Activated CD4-positive, alpha-beta memory T cell treated with anti-CD3 and anti-CD28 coated beads, Interleukin-2, amount 10 ng/mL, durations not matched to agents 7 days and 5 days (primary cell): ENCODE measurements at regions of chr20 and their contacts with region 1.

Region 1: GRCh38 chr20:23420943-23421931 is at the start of gene NAPB:
- DNase-seq: peak; percentile 94
- H3K4me3 Mint-ChIP-seq: peak within 1 kb of the TSS; percentile 95
- H3K27ac Mint-ChIP-seq: peak within 1 kb of the TSS; percentile 71
- H3K4me1 Mint-ChIP-seq: peaks cover 51% of the 10 kb centered on the region
- H3K27me3 Mint-ChIP-seq: no peaks in the 10 kb centered on the region
- total RNA-seq, gene NAPB: 16.0 TPM

Region 2: GRCh38 chr20:23357767-23358591 is 63.3 kb before region 1 on chr20:
- CTCF ChIA-PET with region 1: interaction called, 27 read pairs
- POLR2A ChIA-PET with region 1: interaction called, 122 read pairs
- DNase-seq: peak; percentile 100
- H3K4me3 Mint-ChIP-seq: peak overlapping the region; percentile 93
- H3K27ac Mint-ChIP-seq: peak overlapping the region; percentile 94
- H3K4me1 Mint-ChIP-seq: peaks cover 43% of the 10 kb centered on the region
- H3K27me3 Mint-ChIP-seq: no peaks in the 10 kb centered on the region

Region 3: GRCh38 chr20:23399568-23400241 is 21.5 kb before region 1 on chr20:
- CTCF ChIA-PET with region 1: interaction called, 44 read pairs
- POLR2A ChIA-PET with region 1: interaction called, 58 read pairs
- DNase-seq: peak; percentile 24
- H3K4me3 Mint-ChIP-seq: no peak overlapping the region
- H3K27ac Mint-ChIP-seq: peak overlapping the region; percentile 18
- H3K4me1 Mint-ChIP-seq: peaks cover 50% of the 10 kb centered on the region
- H3K27me3 Mint-ChIP-seq: no peaks in the 10 kb centered on the region

Region 4: GRCh38 chr20:23407781-23408464 is 13.3 kb before region 1 on chr20:
- CTCF ChIA-PET with region 1: interaction called, 44 read pairs
- POLR2A ChIA-PET with region 1: interaction called, 58 read pairs
- DNase-seq: peak; percentile 27
- H3K4me3 Mint-ChIP-seq: no peak overlapping the region
- H3K27ac Mint-ChIP-seq: peak overlapping the region; percentile 28
- H3K4me1 Mint-ChIP-seq: peaks cover 35% of the 10 kb centered on the region
- H3K27me3 Mint-ChIP-seq: no peaks in the 10 kb centered on the region